Right ventricle myocardium inferior (tissue), 1 donor: ENCODE measurements at regions of chr7 and their contacts with region 1.

Region 1: GRCh38 chr7:91636129-91636724 is 244.3 kb downstream of the MTERF1 start:
- DNase-seq: no peak
- ATAC-seq: no peak

Region 2: DNA sequence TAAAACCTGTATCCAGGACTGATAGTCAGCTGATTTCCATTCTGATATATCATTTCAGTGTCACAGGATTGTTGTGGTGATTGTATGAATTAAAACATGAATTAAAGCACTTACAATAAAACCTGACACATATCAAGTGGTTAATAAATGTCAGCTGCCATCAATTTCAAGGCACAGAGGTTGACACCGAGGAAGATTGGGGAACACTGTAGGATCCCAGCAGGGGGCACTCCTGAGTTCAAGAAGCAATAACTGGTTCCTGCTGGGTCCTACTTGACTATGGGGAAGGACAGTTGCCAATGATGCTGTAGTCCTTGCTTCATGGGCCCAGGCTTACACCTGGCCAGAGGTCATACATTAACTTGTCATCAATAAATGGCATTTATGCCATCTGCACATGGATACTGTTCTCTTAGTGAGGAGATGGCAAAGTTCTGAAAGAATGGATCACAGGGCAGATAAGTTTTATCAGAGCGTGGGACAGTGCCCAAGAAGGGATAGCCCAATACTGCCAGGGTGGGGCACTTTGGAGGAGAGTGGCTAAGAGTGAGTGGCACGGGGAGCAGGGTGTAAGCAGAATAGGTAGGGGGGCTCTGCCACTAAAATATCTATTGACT is 347.9 kb before region 1 on chr7:
- intact Hi-C with region 1: loop called (anchors 5 kb)
- DNase-seq: no peak
- ATAC-seq: no peak

Region 3: GRCh38 chr7:91383053-91383904 is 252.9 kb before region 1 on chr7:
- intact Hi-C with region 1: no loop called
- DNase-seq: no peak
- ATAC-seq: no peak